Sigmoid colon (tissue), 7 donors: ENCODE measurements at regions of chr3 and their contacts with region 1.

Region 1: GRCh38 chr3:17412950-17413530 is 329.4 kb downstream of the TBC1D5 start:
- DNase-seq: no peak
- H3K4me3 ChIP-seq: no peak overlapping the region
- H3K27ac ChIP-seq: no peak overlapping the region
- H3K4me1 ChIP-seq: no peaks in the 10 kb centered on the region
- H3K27me3 ChIP-seq: no peaks in the 10 kb centered on the region
- CTCF ChIP-seq: peak; percentile 13 to 70 (median 60)
- EP300 ChIP-seq: no peak
- POLR2A ChIP-seq: no peak

Region 2: GRCh38 chr3:17258823-17259436 is 154.1 kb before region 1 on chr3:
- intact Hi-C with region 1: loop called (anchors 2 kb)
- DNase-seq: no peak
- H3K4me3 ChIP-seq: no peak overlapping the region
- H3K27ac ChIP-seq: no peak overlapping the region
- H3K4me1 ChIP-seq: no peaks in the 10 kb centered on the region
- H3K27me3 ChIP-seq: no peaks in the 10 kb centered on the region
- CTCF ChIP-seq: peak in 3 of 4 experiments; percentile 43 to 76 (median 62)
- EP300 ChIP-seq: no peak
- POLR2A ChIP-seq: no peak